ENCODE measurements at regions of chr5 and their contacts with region 1.

Region 1: GRCh38 chr5:157497875-157498611 is 38.0 kb downstream of the NIPAL4 start:
- DNase-seq: no peak
- ATAC-seq: no peak
- H3K4me3 ChIP-seq: no peak overlapping the region
- H3K27ac ChIP-seq: no peak overlapping the region
- H3K4me1 ChIP-seq: peaks cover 9% of the 10 kb centered on the region
- H3K27me3 ChIP-seq: no peaks in the 10 kb centered on the region
- CTCF ChIP-seq: no peak
- EP300 ChIP-seq: no peak
- POLR2A ChIP-seq: no peak
- RAD21 ChIP-seq: no peak

Region 2: DNA sequence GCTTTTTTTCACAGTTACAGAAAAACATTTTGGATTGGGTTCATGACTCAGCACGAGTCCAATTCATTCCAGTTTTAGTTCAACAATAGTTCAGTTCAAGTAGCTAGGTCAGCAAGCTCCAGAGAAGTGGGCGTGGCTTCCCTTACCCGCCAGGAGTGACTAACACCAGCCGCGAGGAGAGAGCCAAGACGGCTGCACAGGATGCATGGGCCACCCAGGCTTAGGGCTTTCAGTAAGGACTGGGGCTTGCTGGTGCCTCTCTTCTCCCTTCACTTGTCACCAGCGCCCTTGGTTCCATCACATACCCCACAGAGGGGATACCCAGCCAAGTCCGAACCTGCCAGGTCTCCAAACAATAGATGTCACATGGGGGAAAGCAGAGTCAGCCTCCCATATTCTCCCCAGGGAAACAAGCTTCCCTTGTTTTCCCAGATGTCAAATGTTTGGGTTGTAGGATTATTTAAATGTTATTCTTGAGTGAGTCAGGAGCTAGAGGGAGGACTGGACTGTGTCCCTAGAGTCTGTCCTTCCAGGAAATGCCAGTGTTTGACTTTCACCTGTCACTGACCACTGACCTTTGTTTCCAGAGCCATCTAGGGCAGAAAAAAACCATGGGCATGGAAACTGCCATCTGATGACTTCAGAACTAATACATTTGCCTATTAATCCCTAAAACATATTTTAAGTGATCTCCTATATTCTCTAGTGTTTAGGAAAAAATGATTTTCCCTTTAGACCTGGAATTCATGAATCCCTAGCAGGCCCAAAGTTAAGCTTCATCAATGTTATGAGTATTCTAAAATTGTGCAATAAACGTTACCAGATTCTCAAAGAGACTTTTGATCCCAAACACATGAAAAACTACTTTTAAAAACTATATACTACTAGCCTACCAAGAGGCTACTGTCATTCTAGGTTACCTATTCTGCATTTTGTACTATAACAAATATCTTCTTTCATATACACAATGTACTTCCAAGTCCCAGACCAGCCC is 13.9 kb after region 1 on chr5:
- CTCF ChIA-PET with region 1: no interaction called
- POLR2A ChIA-PET with region 1: no interaction called
- in situ Hi-C with region 1: no loop called
- intact Hi-C with region 1: loop called (anchors 2 kb)
- DNase-seq: peak; percentile 79
- ATAC-seq: peak; percentile 87
- H3K4me3 ChIP-seq: peak overlapping the region in 1 of 3 experiments; percentile 27; a peak in 3 of 6 replicates
- H3K27ac ChIP-seq: peak overlapping the region; percentile 16
- H3K4me1 ChIP-seq: peaks cover 26% of the 10 kb centered on the region
- H3K27me3 ChIP-seq: no peaks in the 10 kb centered on the region
- CTCF ChIP-seq: no peak
- EP300 ChIP-seq: peak in 1 of 2 experiments; percentile 33; a peak in 1 of 4 replicates
- POLR2A ChIP-seq: no peak
- RAD21 ChIP-seq: no peak

Region 3: DNA sequence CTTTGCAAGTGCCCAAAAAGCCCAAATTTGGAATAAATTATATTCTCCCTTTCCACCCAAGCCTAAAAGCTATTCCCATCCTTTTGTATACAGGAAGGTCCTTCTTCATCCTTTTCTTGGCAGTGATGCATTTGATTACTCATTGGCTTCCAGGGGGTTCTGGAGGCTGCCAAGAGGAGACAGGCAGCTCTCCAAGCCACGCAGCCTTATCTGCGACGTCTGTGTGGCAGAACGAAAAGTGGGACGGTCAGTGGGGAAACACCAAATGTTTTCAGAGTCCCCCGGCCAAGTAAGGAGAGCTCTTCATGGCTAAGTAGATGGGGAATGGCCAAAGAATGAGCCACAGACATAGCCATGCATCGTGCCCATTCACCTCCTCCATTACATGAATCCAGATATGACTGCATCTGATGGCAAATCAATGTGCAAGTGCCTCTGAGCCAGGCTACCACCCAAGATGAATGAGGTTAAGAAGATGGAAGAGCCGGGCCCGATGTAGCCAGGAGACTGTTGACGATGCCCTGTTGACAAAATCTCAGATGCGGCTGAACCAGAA is 65.4 kb after region 1 on chr5:
- CTCF ChIA-PET with region 1: no interaction called
- POLR2A ChIA-PET with region 1: no interaction called
- in situ Hi-C with region 1: no loop called
- intact Hi-C with region 1: no loop called
- DNase-seq: no peak
- ATAC-seq: no peak; the same call in 2 of the 3 replicates
- H3K4me3 ChIP-seq: no peak overlapping the region
- H3K27ac ChIP-seq: no peak overlapping the region
- H3K4me1 ChIP-seq: peaks cover 20% of the 10 kb centered on the region
- H3K27me3 ChIP-seq: no peaks in the 10 kb centered on the region; a peak in 1 of 5 replicates
- CTCF ChIP-seq: no peak
- EP300 ChIP-seq: no peak
- POLR2A ChIP-seq: no peak
- RAD21 ChIP-seq: no peak